A549 (cell line): ENCODE measurements at regions of chr2 and their contacts with region 1.

Region 1: GRCh38 chr2:70214953-70215549 is 24.2 kb upstream of the C2orf42 start:
- DNase-seq: no peak
- ATAC-seq: no peak
- H3K4me3 ChIP-seq: no peak overlapping the region
- H3K27ac ChIP-seq: no peak overlapping the region
- H3K4me1 ChIP-seq: 0 out of 3 replicates have a peak, but pooled peaks cover 4% of the 10 kb centered on the region
- CTCF ChIP-seq: no peak
- EP300 ChIP-seq: no peak
- POLR2A ChIP-seq: no peak
- RAD21 ChIP-seq: no peak

Region 2: GRCh38 chr2:70241338-70241737 is 26.3 kb after region 1 on chr2:
- CTCF ChIA-PET with region 1: no interaction called
- POLR2A ChIA-PET with region 1: interaction called, 14 read pairs
- DNase-seq: no peak
- ATAC-seq: no peak
- H3K4me3 ChIP-seq: no peak overlapping the region
- H3K27ac ChIP-seq: no peak overlapping the region
- H3K4me1 ChIP-seq: peaks cover 17% of the 10 kb centered on the region
- CTCF ChIP-seq: no peak
- EP300 ChIP-seq: no peak
- POLR2A ChIP-seq: no peak
- RAD21 ChIP-seq: no peak